ENCODE measurements at regions of chr2 and their contacts with region 1.

Region 1: DNA sequence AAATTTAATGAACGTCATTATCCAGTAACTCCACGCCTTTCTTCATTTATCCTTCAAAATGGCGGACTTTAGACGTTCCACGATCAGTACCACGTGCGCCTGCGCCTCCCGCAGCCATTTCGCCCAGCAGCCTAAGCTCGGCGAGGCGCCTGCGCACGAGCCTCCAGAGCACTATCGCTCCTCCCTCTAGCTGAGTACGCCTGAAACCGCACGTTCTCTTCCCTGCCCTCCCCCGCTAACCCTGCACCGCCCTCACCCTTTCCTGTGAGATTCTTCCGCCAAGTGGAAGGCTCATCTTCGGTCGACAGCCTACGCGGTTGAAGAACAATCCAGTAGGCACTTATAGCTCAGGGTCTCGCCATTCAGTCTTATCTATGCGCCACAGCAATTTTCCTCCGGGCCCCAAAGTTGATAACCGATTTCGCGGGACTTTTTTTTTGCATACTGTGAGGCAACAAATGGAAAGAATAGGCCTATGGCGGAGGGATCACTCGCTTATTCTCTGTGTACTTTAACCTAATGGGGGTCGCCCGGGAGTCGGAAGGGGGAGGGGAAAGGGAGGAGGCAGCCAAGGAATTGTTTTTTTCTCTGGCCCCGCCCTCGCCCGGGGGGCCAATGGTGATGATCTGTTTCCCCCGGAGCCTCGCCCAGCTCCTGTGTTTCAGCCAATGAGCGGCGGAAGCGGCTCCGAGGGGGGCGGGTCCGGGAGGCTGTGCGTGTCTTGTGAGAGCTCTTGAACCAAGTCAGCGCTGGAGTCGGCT is at the start of gene KDM3A:
- DNase-seq: peak; percentile 95 to 100 (median 99)
- ATAC-seq: peak; percentile 87
- H3K4me3 ChIP-seq: peak within 1 kb of the TSS; percentile 88
- H3K4me3 Mint-ChIP-seq: peak within 1 kb of the TSS; percentile 92 to 99 (median 97)
- H3K27ac ChIP-seq: peak within 1 kb of the TSS; percentile 78
- H3K27ac Mint-ChIP-seq: peak within 1 kb of the TSS; percentile 97 to 99 (median 99)
- H3K4me1 ChIP-seq: peaks cover 31 to 34% of the 10 kb centered on the region in 2 donors
- H3K4me1 Mint-ChIP-seq: peaks cover 34 to 51% (median 44%) of the 10 kb centered on the region in 7 donors
- H3K27me3 ChIP-seq: no peaks in the 10 kb centered on the region
- H3K27me3 Mint-ChIP-seq: peaks cover 0 to 10% (median 0%) of the 10 kb centered on the region in 5 donors
- total RNA-seq, gene KDM3A: 132 to 191 (median 169) TPM

Region 2: DNA sequence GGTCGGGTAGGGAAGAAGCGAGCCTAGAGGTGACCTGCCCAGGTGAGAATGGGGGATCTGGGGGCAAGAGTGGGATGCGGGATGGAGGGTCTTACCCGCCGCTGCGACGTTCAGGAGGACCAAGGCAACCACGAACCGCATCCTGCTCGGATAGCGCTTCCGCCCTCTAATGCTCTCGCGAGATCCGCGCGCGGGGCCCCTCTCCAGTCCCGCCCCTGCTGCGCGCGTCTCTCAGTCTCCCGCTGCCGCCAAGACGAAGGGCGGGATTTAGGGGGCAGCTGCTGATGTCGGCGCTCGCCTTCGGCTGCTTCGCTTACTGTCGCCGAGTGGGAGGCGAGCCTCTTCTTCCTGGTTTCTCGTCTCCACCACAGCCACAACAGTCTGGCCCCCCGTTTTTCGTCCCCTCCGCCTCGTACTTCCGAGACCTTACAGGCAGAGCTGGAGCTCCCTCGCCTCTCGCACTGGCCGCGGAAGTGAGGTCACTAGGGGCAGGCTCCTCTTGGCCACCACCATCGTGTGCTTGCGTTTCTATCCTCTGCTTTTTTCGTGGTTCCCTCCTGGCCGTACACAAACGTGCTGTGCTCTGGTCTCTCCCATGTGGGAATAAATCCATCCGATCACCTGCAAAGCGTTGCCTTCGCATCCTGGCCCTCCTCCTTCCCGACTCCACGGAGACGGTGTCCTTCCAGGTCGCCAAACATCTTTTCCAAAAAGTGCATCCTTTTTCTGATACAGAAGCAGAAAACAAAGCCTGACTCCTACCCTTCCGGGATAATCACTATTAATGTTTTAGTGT is 1112.8 kb before region 1 on chr2 and contains the start of gene TGOLN2:
- CTCF ChIA-PET with region 1: no interaction called
- POLR2A ChIA-PET with region 1: interaction called, 13 read pairs
- intact Hi-C with region 1: loop called in 1 of 2 experiments (anchors 5 kb)
- DNase-seq: peak; percentile 91 to 96 (median 95)
- ATAC-seq: peak; percentile 94
- H3K4me3 ChIP-seq: peak within 1 kb of the TSS; percentile 84
- H3K4me3 Mint-ChIP-seq: peak within 1 kb of the TSS; percentile 97 to 100 (median 99)
- H3K27ac ChIP-seq: peak within 1 kb of the TSS; percentile 92
- H3K27ac Mint-ChIP-seq: peak within 1 kb of the TSS; percentile 97 to 100 (median 99)
- H3K4me1 ChIP-seq: peaks cover 24 to 31% of the 10 kb centered on the region in 2 donors
- H3K4me1 Mint-ChIP-seq: peaks cover 31 to 51% (median 46%) of the 10 kb centered on the region in 7 donors
- H3K27me3 ChIP-seq: no peaks in the 10 kb centered on the region
- H3K27me3 Mint-ChIP-seq: no peaks in the 10 kb centered on the region
- total RNA-seq, gene TGOLN2: 144 to 200 (median 178) TPM

Region 3: DNA sequence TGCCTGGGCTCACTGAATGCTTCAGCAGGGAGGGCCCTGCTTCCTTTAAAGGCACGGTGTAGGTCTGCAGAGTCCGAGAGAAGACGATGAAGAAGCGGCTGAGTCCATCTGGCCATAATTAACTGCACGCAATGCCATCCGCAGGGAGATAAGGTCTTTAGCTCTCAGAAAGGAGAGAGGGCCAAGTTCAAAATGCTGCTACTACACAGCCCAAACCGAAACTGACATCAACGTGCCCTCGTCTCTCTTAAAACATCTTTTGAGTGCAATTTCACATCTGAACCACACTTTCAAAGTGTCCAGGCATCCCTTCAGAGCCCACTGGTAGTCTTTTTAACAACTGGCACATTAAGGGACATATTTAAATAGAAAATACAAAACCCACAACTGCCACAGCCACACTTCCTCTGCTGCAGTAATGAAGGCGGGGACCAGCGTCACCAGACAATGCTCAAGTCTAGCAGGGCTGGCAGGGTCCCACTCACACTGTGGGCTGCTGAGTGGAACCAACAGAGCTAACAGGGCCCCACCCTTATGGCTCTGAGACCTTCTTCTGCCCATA is 587.8 kb before region 1 on chr2:
- CTCF ChIA-PET with region 1: no interaction called
- POLR2A ChIA-PET with region 1: interaction called, 4 read pairs
- intact Hi-C with region 1: loop called (anchors 5 kb)
- DNase-seq: peak; percentile 35 to 77 (median 63)
- ATAC-seq: peak; percentile 92
- H3K4me3 ChIP-seq: peak overlapping the region; percentile 36
- H3K4me3 Mint-ChIP-seq: peak overlapping the region; percentile 80 to 94 (median 86)
- H3K27ac ChIP-seq: peak overlapping the region; percentile 91
- H3K27ac Mint-ChIP-seq: peak overlapping the region; percentile 98 to 100 (median 100)
- H3K4me1 ChIP-seq: peaks cover 54% of the 10 kb centered on the region in 2 donors
- H3K4me1 Mint-ChIP-seq: peaks cover 48 to 84% (median 68%) of the 10 kb centered on the region in 7 donors
- H3K27me3 ChIP-seq: no peaks in the 10 kb centered on the region
- H3K27me3 Mint-ChIP-seq: no peaks in the 10 kb centered on the region

Region 4: GRCh38 chr2:86105252-86105968 is 335.4 kb before region 1 on chr2 and contains the start of gene POLR1A:
- CTCF ChIA-PET with region 1: no interaction called
- POLR2A ChIA-PET with region 1: interaction called, 17 read pairs
- intact Hi-C with region 1: loop called (anchors 1 kb)
- DNase-seq: peak; percentile 61 to 91 (median 89)
- ATAC-seq: peak; percentile 86
- H3K4me3 ChIP-seq: peak within 1 kb of the TSS; percentile 95
- H3K4me3 Mint-ChIP-seq: peak within 1 kb of the TSS; percentile 90 to 97 (median 92)
- H3K27ac ChIP-seq: peak within 1 kb of the TSS; percentile 86
- H3K27ac Mint-ChIP-seq: peak within 1 kb of the TSS; percentile 95 to 100 (median 99)
- H3K4me1 ChIP-seq: peaks cover 20 to 28% of the 10 kb centered on the region in 2 donors
- H3K4me1 Mint-ChIP-seq: peaks cover 37 to 86% (median 76%) of the 10 kb centered on the region in 7 donors
- H3K27me3 ChIP-seq: no peaks in the 10 kb centered on the region
- H3K27me3 Mint-ChIP-seq: no peaks in the 10 kb centered on the region
- total RNA-seq, gene POLR1A: 18.8 to 44.4 (median 21.7) TPM

Region 5: DNA sequence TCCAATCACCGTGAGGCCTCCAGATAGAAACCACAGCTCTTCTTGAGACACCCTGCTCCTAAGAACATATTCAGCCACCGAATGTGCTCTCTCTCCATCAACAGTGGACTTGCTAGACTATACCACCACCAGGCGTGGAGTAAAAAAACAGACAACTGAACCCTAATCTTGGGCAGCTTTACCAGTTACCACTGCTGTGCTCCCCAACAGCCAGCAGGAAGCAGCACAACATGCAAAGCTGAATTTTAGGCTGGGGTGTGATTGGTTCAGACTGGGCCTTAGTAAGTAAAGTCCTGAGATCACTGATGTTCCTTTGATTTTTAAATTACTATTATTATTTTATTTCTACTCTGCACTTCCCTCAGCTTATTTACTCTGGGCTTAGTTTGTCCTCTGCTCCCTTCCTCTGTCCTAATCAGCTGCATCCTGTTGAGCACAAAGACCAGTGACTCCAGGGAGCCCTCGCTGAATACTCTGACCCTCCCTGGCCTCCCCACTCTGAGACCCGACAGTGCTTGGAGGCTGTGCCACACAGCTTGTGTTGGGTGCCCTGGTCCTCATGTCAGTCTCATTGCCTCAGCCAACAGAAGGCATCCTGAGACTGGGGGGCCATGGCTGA is 219.6 kb before region 1 on chr2:
- CTCF ChIA-PET with region 1: interaction called, 5 read pairs
- POLR2A ChIA-PET with region 1: interaction called, 30 read pairs
- intact Hi-C with region 1: loop called (anchors 1 to 10 kb)
- DNase-seq: peak; percentile 32 to 66 (median 46)
- ATAC-seq: peak; percentile 74
- H3K4me3 ChIP-seq: no peak overlapping the region
- H3K4me3 Mint-ChIP-seq: no peak overlapping the region
- H3K27ac ChIP-seq: no peak overlapping the region
- H3K27ac Mint-ChIP-seq: peak overlapping the region in 3 of 9 donors; percentile 24 to 79 (median 62)
- H3K4me1 ChIP-seq: peaks cover 0 to 4% of the 10 kb centered on the region in 2 donors
- H3K4me1 Mint-ChIP-seq: peaks cover 15 to 40% (median 29%) of the 10 kb centered on the region in 7 donors
- H3K27me3 ChIP-seq: no peaks in the 10 kb centered on the region
- H3K27me3 Mint-ChIP-seq: no peaks in the 10 kb centered on the region

Region 6: GRCh38 chr2:86331384-86331783 is 109.4 kb before region 1 on chr2:
- CTCF ChIA-PET with region 1: no interaction called
- POLR2A ChIA-PET with region 1: no interaction called
- intact Hi-C with region 1: no loop called
- DNase-seq: no peak
- ATAC-seq: no peak
- H3K4me3 ChIP-seq: no peak overlapping the region
- H3K4me3 Mint-ChIP-seq: no peak overlapping the region
- H3K27ac ChIP-seq: no peak overlapping the region
- H3K27ac Mint-ChIP-seq: no peak overlapping the region
- H3K4me1 ChIP-seq: no peaks in the 10 kb centered on the region
- H3K4me1 Mint-ChIP-seq: peaks cover 0 to 12% (median 7%) of the 10 kb centered on the region in 7 donors
- H3K27me3 ChIP-seq: peaks cover 5% of the 10 kb centered on the region in 2 donors
- H3K27me3 Mint-ChIP-seq: peaks cover 21 to 45% (median 22%) of the 10 kb centered on the region in 5 donors

Region 7: GRCh38 chr2:86464652-86465051 is 23.8 kb after region 1 on chr2:
- CTCF ChIA-PET with region 1: interaction called, 5 read pairs
- POLR2A ChIA-PET with region 1: interaction called, 40 read pairs
- intact Hi-C with region 1: loop called (anchors 1 to 2 kb)
- DNase-seq: no peak
- ATAC-seq: no peak
- H3K4me3 ChIP-seq: no peak overlapping the region
- H3K4me3 Mint-ChIP-seq: peak overlapping the region in 5 of 10 donors; percentile 3 to 60 (median 21)
- H3K27ac ChIP-seq: no peak overlapping the region
- H3K27ac Mint-ChIP-seq: peak overlapping the region; percentile 28 to 81 (median 73)
- H3K4me1 ChIP-seq: peaks cover 0 to 15% of the 10 kb centered on the region in 2 donors
- H3K4me1 Mint-ChIP-seq: peaks cover 29 to 79% (median 65%) of the 10 kb centered on the region in 7 donors
- H3K27me3 ChIP-seq: no peaks in the 10 kb centered on the region
- H3K27me3 Mint-ChIP-seq: no peaks in the 10 kb centered on the region

Region 8: GRCh38 chr2:86552889-86553288 is 112.1 kb after region 1 on chr2:
- CTCF ChIA-PET with region 1: no interaction called
- POLR2A ChIA-PET with region 1: interaction called, 17 read pairs
- intact Hi-C with region 1: no loop called
- DNase-seq: peak in 7 of 9 donors; percentile 42 to 75 (median 68)
- ATAC-seq: peak; percentile 87
- H3K4me3 ChIP-seq: peak overlapping the region; percentile 22
- H3K4me3 Mint-ChIP-seq: peak overlapping the region; percentile 61 to 90 (median 83)
- H3K27ac ChIP-seq: peak overlapping the region; percentile 8
- H3K27ac Mint-ChIP-seq: peak overlapping the region in 7 of 9 donors; percentile 71 to 98 (median 93)
- H3K4me1 ChIP-seq: peaks cover 13 to 30% of the 10 kb centered on the region in 2 donors
- H3K4me1 Mint-ChIP-seq: peaks cover 1 to 42% (median 19%) of the 10 kb centered on the region in 7 donors
- H3K27me3 ChIP-seq: no peaks in the 10 kb centered on the region
- H3K27me3 Mint-ChIP-seq: no peaks in the 10 kb centered on the region